ENCODE measurements at regions of chr20 and their contacts with region 1.

Region 1: DNA sequence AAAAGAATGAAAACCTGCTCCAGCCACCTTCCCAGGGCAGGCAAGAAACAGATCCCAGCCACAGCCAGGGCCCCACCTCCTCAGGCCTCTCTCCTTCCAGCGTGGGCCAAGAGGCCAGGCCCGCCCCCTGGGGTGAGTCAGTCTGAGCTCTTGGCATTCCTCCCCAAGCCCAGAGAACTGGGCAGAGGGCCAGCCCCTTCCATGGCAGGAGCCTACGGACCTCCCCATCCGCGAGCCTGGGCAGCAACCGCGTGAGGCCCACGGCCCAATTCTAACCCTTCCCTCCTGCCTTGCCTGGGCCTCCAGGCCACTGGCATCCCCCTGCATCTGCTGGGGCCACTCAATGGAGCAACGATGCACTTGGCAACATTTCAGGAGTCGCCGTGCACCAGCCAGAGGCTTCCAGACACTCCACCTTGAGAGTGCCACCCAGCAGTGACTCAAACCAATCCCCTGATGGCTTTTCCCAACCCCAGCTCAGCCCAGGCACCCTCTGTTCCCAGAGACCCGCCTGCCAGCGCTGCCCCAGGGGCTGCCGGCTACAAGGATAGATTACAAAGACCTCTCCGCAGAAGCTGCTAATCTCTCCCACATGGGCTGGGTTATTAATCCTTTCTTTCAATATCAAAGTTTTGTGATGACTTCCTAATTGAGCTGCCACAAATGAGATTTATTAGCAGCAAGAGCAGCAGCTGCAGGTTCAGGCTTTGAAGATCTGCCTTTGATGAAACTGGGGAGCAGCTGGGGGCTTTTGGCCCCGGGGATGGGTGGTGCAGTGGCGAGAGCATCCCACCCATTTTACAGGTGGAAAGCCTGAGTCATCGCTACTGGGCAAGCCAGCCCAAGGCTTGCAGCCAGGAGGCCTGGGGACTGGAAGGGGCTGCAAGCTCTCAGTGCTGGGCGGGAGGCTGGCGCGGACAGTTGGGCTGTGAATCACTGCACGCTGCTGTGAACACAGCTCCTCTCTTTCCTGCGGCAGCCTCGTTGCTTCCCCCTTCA is 85.7 kb downstream of the NFATC2 start:
- DNase-seq: peak; percentile 98

Region 2: DNA sequence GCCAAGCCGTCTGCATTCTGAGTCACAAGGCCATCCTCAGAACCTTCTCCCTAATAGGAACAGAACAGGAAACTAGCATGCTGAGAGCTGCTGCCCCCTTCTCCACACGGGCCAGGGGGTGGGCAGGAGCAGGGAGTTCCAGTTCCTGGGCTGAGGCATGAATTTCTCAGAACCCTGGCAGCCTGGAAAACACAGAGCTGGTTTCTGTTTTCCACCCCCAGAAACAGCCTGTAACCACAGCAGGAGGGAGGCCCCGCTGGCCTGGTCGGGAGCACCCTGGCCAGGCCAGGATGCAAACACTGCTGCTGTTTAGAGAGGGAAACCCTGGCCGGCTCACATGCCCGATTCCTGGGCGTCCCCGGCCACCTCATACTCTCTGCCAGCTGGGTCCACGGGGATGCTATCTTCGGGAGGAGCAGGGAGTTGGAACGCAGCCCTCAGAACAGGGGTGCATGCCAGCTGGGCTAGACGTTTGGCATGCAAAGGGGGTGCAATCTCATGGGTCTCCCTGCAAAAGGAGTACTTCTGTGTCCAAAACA is 44.4 kb before region 1 on chr20:
- intact Hi-C with region 1: no loop called
- DNase-seq: no peak

Region 3: GRCh38 chr20:51487565-51488268 is 30.9 kb after region 1 on chr20:
- intact Hi-C with region 1: no loop called
- DNase-seq: peak; percentile 42

Region 4: GRCh38 chr20:51554538-51555165 is 97.8 kb after region 1 on chr20:
- intact Hi-C with region 1: loop called in 1 of 2 experiments (anchors 10 kb)
- DNase-seq: no peak

Region 5: DNA sequence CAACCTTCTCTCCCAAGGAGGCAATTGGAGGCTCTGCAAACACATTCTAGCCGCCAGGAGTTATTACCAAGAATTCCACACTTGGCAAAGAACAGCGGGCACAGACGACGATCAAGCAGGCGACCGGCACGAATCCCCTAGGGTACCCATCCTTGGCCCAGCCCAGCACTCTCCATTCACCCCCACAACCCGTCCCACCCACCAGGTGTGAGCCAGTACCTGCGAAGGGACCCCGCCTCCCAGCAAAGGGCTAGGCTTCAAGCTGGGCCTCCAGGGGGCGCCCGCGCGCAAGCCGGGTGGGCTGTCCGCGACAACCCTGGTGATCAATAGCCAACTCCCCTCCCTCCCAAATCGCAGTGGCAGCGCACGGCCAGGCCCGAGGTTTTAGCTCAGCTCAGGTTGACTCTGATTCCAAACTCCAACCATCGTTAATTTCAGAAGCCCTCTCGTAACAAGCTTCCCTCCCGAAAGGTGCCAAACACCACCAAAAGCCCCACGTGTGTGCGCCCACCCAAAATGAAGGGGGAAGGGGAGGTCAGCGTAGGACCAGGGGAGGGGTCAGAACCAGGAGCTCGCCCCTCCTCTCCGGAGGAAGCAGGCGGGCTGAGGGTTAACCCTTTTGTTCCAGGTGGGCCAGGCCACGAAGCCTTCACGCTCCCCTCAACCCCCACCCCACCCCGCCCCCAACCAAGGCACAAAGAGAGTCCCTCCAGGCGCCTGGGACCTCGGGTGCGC is 343.4 kb after region 1 on chr20:
- intact Hi-C with region 1: no loop called
- DNase-seq: no peak